B cell (primary cell): ENCODE measurements at regions of chr1 and their contacts with region 1.

Region 1: DNA sequence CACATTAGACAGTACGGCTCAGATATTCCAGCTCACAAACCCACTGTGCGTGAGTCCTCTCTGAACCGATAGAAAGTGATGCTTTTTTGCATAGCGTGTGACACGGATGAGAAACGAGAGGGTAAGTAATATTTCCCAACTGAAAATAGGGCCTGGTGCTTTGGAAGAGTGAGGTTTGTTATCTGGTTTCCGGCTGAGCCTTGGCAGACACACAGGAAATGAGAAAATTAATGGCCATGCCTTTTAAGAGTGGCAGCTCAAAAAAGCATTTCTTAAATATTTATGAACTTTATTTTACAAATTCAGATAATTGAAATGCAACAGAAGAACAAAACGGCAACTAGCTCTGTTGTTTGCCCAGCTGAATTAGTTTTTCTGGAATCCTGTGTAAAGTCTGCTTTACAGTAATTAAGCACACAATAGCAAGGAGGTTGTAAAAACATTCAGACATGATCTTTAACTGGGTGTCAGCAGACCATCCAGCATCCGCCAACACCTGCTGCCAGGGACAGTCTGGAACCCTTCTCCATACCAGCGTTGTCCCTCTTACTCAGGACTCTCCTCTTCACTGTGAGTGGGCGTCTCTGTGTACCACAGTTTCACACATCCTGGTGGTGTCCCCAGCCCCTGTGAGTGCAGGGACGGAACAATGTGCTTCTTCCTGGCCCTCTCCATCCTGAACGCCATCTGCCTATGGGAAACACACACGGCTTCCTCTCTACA is 155.4 kb downstream of the PGBD5 start:
- DNase-seq: peak; percentile 31
- ATAC-seq: peak; percentile 34
- H3K4me3 ChIP-seq: no peak overlapping the region
- H3K4me3 Mint-ChIP-seq: peak overlapping the region; percentile 58
- H3K27ac ChIP-seq: peak overlapping the region; percentile 0 to 64
- H3K27ac Mint-ChIP-seq: peak overlapping the region; percentile 73
- H3K4me1 ChIP-seq: peaks cover 35 to 42% of the 10 kb centered on the region in 2 donors
- H3K4me1 Mint-ChIP-seq: peaks cover 46% of the 10 kb centered on the region
- H3K27me3 ChIP-seq: no peaks in the 10 kb centered on the region
- H3K27me3 Mint-ChIP-seq: no peaks in the 10 kb centered on the region
- CTCF ChIP-seq: no peak

Region 2: GRCh38 chr1:229928767-229929166 is 342.0 kb before region 1 on chr1:
- CTCF ChIA-PET with region 1: no interaction called
- POLR2A ChIA-PET with region 1: interaction called, 12 read pairs
- intact Hi-C with region 1: no loop called
- DNase-seq: no peak
- ATAC-seq: no peak
- H3K4me3 ChIP-seq: no peak overlapping the region
- H3K4me3 Mint-ChIP-seq: no peak overlapping the region
- H3K27ac ChIP-seq: no peak overlapping the region
- H3K27ac Mint-ChIP-seq: no peak overlapping the region
- H3K4me1 ChIP-seq: no peaks in the 10 kb centered on the region
- H3K4me1 Mint-ChIP-seq: no peaks in the 10 kb centered on the region
- H3K27me3 ChIP-seq: peaks cover 0 to 7% (median 1%) of the 10 kb centered on the region in 4 experiments
- H3K27me3 Mint-ChIP-seq: peaks cover 28% of the 10 kb centered on the region
- CTCF ChIP-seq: no peak